ENCODE measurements at regions of chr7 and their contacts with region 1.

Region 1: DNA sequence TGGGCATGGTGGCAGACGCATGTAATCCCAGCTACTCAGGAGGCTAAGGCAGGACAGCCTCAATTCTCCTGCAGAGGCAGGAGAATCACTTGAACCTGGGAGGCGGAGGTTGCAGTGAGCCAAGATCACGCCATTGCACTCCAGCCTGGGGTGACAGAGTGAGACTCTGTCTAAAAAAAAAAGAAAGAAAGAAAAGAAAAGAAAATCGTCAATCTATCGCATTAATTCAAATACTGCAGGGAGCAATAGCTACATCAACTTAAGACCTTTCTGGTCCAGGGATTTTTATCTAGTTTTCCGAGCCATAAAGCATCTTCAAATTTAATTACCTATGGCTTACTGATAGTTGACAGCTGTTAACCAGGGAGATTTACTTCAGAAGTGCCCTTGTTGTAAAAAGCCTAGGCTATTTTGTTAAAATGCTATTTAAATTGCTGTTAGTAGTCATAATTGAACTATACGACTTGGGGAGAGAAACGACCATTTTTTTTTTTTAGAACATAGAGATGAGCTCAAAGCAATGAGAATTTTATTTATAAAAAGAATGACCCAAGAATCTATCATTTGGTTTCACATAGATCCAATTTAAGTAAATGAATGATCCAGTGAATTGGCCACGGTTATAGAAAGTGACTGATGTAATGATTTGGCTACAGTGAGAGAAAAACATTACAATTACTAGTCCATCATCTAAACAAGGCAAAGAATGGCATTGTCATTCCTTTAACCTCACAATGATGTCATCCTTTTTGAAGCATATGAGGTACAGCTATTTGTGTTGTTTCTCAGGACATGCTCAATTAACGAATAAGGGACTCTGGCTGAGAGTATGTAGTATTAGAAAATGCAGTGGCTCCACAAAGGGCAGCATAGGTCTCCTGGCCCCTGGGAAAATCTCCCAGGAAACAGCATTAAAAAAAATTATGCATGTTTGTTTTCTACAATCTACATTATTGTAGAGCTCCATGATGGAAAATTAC is 85.3 kb downstream of the SEMA3C start:
- DNase-seq: no peak
- ATAC-seq: no peak

Region 2: GRCh38 chr7:80859272-80859970 is 25.8 kb after region 1 on chr7:
- intact Hi-C with region 1: loop called (anchors 1 kb)
- DNase-seq: peak; percentile 63
- ATAC-seq: peak; percentile 90